ENCODE measurements at regions of chr17 and their contacts with region 1.

Region 1: GRCh38 chr17:27353461-27354050 is 59.6 kb downstream of the WSB1 start:
- DNase-seq: peak; percentile 90 to 96 (median 90)
- H3K4me3 ChIP-seq: peak overlapping the region; percentile 55 to 76 (median 74)
- H3K4me3 Mint-ChIP-seq: peak overlapping the region; percentile 75 to 87
- H3K27ac ChIP-seq: peak overlapping the region; percentile 60 to 81
- H3K27ac Mint-ChIP-seq: peak overlapping the region; percentile 84 to 95 (median 89)
- H3K4me1 ChIP-seq: peaks cover 22 to 34% of the 10 kb centered on the region in 2 donors
- H3K4me1 Mint-ChIP-seq: peaks cover 30% of the 10 kb centered on the region
- H3K27me3 ChIP-seq: no peaks in the 10 kb centered on the region
- H3K27me3 Mint-ChIP-seq: peaks cover 0 to 2% (median 2%) of the 10 kb centered on the region in 3 donors
- CTCF ChIP-seq: peak; percentile 85

Region 2: GRCh38 chr17:27236717-27237315 is 116.7 kb before region 1 on chr17:
- intact Hi-C with region 1: loop called in 1 of 2 experiments (anchors 5 kb)
- DNase-seq: peak; percentile 62 to 84 (median 72)
- H3K4me3 ChIP-seq: no peak overlapping the region
- H3K4me3 Mint-ChIP-seq: no peak overlapping the region
- H3K27ac ChIP-seq: peak overlapping the region in 1 of 2 donors; percentile 36
- H3K27ac Mint-ChIP-seq: peak overlapping the region in 2 of 7 donors; percentile 15 to 41
- H3K4me1 ChIP-seq: peaks cover 69 to 75% of the 10 kb centered on the region in 2 donors
- H3K4me1 Mint-ChIP-seq: peaks cover 70% of the 10 kb centered on the region
- H3K27me3 ChIP-seq: no peaks in the 10 kb centered on the region
- H3K27me3 Mint-ChIP-seq: peaks cover 0 to 2% (median 0%) of the 10 kb centered on the region in 3 donors
- CTCF ChIP-seq: peak; percentile 96

Region 3: DNA sequence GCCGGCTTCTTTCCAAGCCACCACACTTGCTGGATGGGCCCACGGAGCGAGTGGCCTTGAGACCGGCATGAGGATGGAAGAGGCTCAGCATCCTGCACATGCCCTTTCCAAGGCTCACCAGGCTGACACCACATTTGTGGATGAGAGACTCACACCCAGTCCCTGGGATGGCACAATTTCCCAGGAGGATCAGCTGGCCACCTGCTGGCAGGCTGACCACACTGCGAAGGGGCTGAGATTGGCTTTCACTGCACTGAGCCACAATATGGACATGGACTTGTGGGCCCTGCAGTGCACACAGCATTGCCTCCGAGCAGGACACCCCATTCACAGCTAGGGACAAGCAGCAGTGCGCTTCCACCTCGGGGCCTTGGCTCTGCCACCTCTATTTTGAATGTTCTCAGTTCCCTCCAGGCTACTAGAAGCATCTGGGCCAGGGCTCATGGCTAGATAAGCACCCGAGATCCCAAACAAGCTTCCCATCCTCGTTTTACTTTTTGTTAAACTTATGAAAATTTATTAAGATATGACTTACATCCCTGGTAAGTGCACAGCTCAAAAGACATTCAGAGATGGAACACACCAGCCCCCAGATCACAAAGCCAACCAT is 77.4 kb after region 1 on chr17:
- intact Hi-C with region 1: loop called in 1 of 2 experiments (anchors 2 kb)
- DNase-seq: peak; percentile 29 to 52 (median 49)
- H3K4me3 ChIP-seq: no peak overlapping the region
- H3K4me3 Mint-ChIP-seq: no peak overlapping the region
- H3K27ac ChIP-seq: no peak overlapping the region
- H3K27ac Mint-ChIP-seq: peak overlapping the region in 1 of 7 donors; percentile 30
- H3K4me1 ChIP-seq: no peaks in the 10 kb centered on the region
- H3K4me1 Mint-ChIP-seq: no peaks in the 10 kb centered on the region
- H3K27me3 ChIP-seq: no peaks in the 10 kb centered on the region
- H3K27me3 Mint-ChIP-seq: no peaks in the 10 kb centered on the region
- CTCF ChIP-seq: peak; percentile 79